Posterior vena cava (tissue), 2 donors: ENCODE measurements at regions of chr7 and their contacts with region 1.

Region 1: DNA sequence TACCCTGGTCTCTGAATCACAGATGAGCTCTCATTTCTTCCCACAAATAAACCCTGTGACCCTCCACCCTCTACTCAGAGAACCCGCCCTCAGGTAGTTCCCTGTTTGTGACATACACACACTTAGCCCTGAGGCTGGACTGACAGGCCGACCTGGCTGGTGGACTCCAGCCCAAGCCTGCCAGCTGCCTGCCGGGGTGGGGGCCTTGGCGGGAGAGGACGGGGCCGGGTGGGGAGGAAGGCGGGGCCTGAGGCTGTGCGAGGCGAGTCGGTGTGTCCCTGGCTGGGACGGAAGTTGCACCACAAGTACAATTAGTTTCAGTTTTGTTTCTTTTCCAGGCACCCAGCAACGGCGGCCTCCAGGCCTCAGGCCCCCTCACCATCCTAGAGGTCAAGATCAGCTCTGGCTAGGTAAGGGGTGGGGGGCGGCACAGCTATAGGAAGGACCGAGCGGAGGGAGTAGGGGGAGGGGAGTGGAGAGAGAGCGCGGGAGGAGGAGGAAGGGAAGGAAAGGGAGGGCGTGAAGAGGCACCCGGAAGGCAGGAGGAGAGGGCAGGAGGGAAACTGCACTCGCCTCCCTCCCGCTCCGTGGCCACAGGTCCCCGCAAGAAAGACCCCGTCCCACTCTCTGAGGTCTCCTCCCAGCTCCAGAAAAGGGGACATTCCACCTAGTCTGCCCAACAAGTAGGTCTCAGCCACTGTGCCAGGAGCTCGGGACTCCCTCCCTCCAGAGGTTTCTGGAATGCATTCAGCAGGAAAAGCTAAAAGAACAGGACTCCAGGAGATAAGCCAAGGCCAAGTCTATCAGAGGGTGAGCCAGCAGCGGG is at the start of gene TRIM56:
- DNase-seq: peak; percentile 95
- total RNA-seq, gene TRIM56: 33.0 to 38.2 TPM

Region 2: DNA sequence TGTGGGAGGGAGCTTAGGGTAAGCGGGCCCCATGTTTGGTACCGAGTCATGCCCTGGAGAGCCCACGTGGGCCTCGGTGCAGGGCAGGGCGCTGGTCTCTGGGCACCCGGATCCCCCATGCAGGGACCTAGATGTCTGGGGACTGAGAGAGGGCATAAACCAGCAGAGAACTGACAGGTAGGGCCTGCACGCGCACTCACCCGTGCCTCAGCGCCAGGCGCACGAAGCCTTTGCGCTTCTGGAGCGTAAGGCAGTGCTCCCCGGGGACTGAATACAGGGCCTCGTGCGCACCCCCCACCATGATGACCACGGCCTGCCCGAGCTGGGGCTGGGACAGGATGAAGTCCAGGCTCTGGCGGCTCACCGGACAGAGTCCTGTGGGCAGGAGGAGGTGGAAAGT is 112.6 kb after region 1 on chr7:
- intact Hi-C with region 1: loop called in 1 of 2 experiments (anchors 10 kb)
- DNase-seq: no peak

Region 3: GRCh38 chr7:101496017-101496416 is 410.6 kb after region 1 on chr7:
- intact Hi-C with region 1: no loop called
- DNase-seq: no peak